ENCODE measurements at regions of chr6 and their contacts with region 1.

Region 1: DNA sequence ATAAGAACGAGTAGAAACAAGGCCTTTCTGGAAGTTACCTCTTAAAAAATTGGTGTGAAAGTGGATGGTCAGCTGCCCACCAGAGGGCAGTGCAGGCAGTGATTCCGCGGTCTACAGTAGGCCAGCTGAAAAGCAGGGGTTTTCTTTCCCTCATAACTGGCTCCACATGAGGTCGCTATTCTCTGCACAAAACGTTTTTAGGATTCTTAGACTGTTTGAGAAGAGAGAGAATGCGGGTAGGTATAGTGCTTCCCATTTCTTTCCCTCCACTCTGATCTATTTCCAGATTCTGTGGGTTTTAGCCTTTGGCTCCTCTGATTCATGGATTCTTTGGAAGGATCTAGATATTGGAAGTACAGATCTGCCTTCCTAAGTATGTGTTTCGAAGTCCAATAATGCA is 14.2 kb downstream of the FIG4 start:
- DNase-seq: peak; percentile 70
- ATAC-seq: peak; percentile 98
- H3K4me3 Mint-ChIP-seq: no peak overlapping the region
- H3K27ac Mint-ChIP-seq: no peak overlapping the region
- H3K4me1 Mint-ChIP-seq: peaks cover 52% of the 10 kb centered on the region
- H3K27me3 Mint-ChIP-seq: no peaks in the 10 kb centered on the region
- CTCF ChIP-seq: peak; percentile 98

Region 2: DNA sequence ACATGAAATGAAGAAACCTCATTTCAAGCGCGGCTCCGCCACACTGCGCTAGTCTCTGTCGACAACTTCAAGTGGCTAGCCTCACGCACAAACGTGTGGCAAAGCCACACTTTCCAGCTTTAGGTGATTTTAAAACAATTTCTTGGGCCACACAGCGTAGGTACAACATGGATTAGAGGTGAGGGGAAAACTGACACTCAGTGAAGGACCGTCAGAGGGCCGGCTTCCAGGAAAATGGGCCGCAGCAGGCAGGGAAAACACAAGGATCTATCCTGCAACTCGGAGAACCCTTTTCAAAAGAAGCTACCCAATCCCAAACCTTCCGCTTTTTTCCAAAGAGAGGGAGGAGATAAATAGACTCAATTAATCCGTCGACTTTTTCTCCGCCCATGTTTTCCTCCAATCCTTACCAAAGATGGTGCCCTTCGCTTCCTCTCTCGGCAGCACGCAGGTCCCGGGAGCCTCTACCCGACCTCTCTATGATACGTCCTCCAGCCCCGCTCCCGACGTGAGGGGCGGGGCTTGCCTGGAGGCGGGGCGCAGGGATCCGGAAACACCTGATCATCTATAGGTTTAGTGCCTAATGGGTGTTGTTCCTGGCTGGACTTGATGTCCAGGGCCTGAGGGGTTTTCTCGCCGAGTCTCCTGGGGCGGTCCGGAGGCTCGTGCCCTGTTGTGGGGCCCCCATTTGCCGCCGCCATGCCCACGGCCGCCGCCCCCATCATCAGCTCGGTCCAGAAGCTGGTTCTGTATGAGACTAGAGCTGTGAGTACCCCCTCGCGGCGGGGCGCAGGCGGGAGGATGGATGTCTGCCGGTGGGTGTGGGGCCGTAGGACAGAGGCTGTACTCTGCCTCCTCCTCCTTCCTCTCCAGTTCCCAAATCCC is 14.3 kb before region 1 on chr6 and contains the starts of genes AK9 and FIG4:
- CTCF ChIA-PET with region 1: interaction called, 17 read pairs
- POLR2A ChIA-PET with region 1: interaction called, 3 read pairs
- intact Hi-C with region 1: loop called (anchors 1 kb)
- DNase-seq: peak; percentile 88
- ATAC-seq: peak; percentile 93
- H3K4me3 Mint-ChIP-seq: peak within 1 kb of the TSS; percentile 94
- H3K27ac Mint-ChIP-seq: peak within 1 kb of the TSS; percentile 95
- H3K4me1 Mint-ChIP-seq: peaks cover 42% of the 10 kb centered on the region
- H3K27me3 Mint-ChIP-seq: no peaks in the 10 kb centered on the region
- CTCF ChIP-seq: no peak
- total RNA-seq, gene AK9: 9.1 and 10.6 TPM in 2 replicates
- total RNA-seq, gene FIG4: 19.8 and 21.8 TPM in 2 replicates

Region 3: GRCh38 chr6:109783250-109783986 is 78.2 kb after region 1 on chr6:
- CTCF ChIA-PET with region 1: interaction called, 5 read pairs
- POLR2A ChIA-PET with region 1: no interaction called
- intact Hi-C with region 1: loop called (anchors 1 kb)
- DNase-seq: no peak
- ATAC-seq: no peak
- H3K4me3 Mint-ChIP-seq: no peak overlapping the region
- H3K27ac Mint-ChIP-seq: no peak overlapping the region
- H3K4me1 Mint-ChIP-seq: peaks cover 8% of the 10 kb centered on the region
- H3K27me3 Mint-ChIP-seq: no peaks in the 10 kb centered on the region
- CTCF ChIP-seq: no peak

Region 4: GRCh38 chr6:110053395-110054240 is 348.4 kb after region 1 on chr6:
- CTCF ChIA-PET with region 1: interaction called, 11 read pairs
- POLR2A ChIA-PET with region 1: no interaction called
- intact Hi-C with region 1: loop called (anchors 1 kb)
- DNase-seq: no peak
- ATAC-seq: no peak
- H3K4me3 Mint-ChIP-seq: no peak overlapping the region
- H3K27ac Mint-ChIP-seq: no peak overlapping the region
- H3K4me1 Mint-ChIP-seq: no peaks in the 10 kb centered on the region
- H3K27me3 Mint-ChIP-seq: peaks cover 3% of the 10 kb centered on the region
- CTCF ChIP-seq: no peak

Measured in activated B cell treated with CpG ODN at 0.5 μM for 24 hours (primary cell).